Activated B cell treated with CpG ODN at 0.5 μM for 24 hours (primary cell): ENCODE measurements at regions of chr11 and their contacts with region 1.

Region 1: GRCh38 chr11:64971421-64972233 is at the start of gene MAJIN:
- DNase-seq: peak; percentile 83
- ATAC-seq: peak; percentile 77
- H3K4me3 Mint-ChIP-seq: peak within 1 kb of the TSS; percentile 80
- H3K27ac Mint-ChIP-seq: peak within 1 kb of the TSS; percentile 84
- H3K4me1 Mint-ChIP-seq: peaks cover 34% of the 10 kb centered on the region
- H3K27me3 Mint-ChIP-seq: no peaks in the 10 kb centered on the region
- CTCF ChIP-seq: no peak
- total RNA-seq, gene MAJIN: 0.20 and 1.5 TPM in 2 replicates

Region 2: GRCh38 chr11:64924102-64924851 is 47.4 kb before region 1 on chr11 and contains the start of gene PPP2R5B:
- CTCF ChIA-PET with region 1: no interaction called
- POLR2A ChIA-PET with region 1: no interaction called
- intact Hi-C with region 1: loop called (anchors 5 kb)
- DNase-seq: peak; percentile 83
- ATAC-seq: peak; percentile 95
- H3K4me3 Mint-ChIP-seq: peak within 1 kb of the TSS; percentile 93
- H3K27ac Mint-ChIP-seq: peak within 1 kb of the TSS; percentile 96
- H3K4me1 Mint-ChIP-seq: peaks cover 27% of the 10 kb centered on the region
- H3K27me3 Mint-ChIP-seq: no peaks in the 10 kb centered on the region
- CTCF ChIP-seq: no peak
- total RNA-seq, gene PPP2R5B: 12.0 and 12.6 TPM in 2 replicates

Region 3: GRCh38 chr11:64954201-64954600 is 17.4 kb before region 1 on chr11:
- CTCF ChIA-PET with region 1: no interaction called
- POLR2A ChIA-PET with region 1: interaction called, 4 read pairs
- intact Hi-C with region 1: loop called (anchors 2 kb)
- DNase-seq: no peak
- ATAC-seq: no peak
- H3K4me3 Mint-ChIP-seq: no peak overlapping the region
- H3K27ac Mint-ChIP-seq: no peak overlapping the region
- H3K4me1 Mint-ChIP-seq: no peaks in the 10 kb centered on the region
- H3K27me3 Mint-ChIP-seq: peaks cover 6% of the 10 kb centered on the region
- CTCF ChIP-seq: no peak

Region 4: DNA sequence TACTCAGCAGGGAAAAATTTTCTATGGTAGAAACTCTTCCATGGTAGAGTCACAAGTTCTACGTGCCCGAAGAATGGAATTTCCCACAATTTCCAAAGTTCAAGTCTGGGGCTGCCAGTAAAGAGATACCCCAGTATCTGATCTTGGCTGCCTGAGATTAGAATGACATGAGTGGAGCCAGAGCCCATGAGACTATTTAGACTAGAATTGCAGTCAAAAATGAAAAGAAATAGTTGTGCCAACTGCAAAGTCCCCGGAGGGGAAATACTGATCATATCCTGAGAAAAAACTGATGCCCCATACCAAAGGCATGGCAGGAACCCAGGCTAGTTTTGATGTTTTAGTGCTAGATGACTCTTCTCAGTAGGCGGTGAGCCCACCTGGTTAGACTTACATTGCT is 10.9 kb before region 1 on chr11:
- CTCF ChIA-PET with region 1: no interaction called
- POLR2A ChIA-PET with region 1: interaction called, 13 read pairs
- intact Hi-C with region 1: loop called (anchors 2 kb)
- DNase-seq: no peak
- ATAC-seq: no peak
- H3K4me3 Mint-ChIP-seq: no peak overlapping the region
- H3K27ac Mint-ChIP-seq: no peak overlapping the region
- H3K4me1 Mint-ChIP-seq: peaks cover 6% of the 10 kb centered on the region
- H3K27me3 Mint-ChIP-seq: peaks cover 2% of the 10 kb centered on the region
- CTCF ChIP-seq: no peak

Region 5: DNA sequence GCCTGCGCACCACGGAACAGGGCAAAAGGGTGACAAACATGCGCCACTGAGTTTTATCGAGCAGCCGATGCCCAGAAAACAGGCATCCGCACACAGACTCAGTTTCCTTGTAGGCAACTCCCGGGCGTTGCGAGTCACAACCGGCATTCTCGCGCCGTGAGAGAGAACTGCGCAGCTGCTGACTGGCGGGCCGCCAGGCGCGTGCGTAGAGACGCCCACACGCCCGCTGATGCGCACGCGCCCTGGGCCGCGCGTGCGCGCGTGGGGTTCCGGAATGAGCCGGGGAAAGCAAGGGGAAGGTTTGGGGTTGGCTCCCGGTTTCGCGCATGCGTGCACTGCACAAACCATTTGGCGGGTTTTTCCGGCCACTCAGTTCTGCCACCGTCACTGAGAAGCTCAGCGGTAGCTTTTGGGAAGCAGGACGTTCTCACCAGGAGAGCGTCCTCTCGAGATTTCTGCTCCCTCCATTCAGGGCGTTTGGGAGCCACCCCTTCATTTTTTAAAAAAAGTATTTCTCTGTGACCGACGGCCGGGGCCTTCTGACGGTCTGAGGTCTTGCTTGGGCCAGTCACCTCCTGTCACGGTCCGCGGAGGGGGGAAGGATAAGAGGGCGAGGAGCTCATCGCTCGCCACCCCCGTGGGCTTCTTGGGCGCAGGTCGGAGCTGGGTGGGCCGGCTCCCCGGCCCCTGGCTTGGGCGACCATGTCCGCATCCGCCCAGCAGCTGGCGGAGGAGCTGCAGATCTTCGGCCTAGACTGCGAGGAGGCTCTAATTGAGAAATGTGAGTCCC is 290.2 kb after region 1 on chr11 and contains the start of gene POLA2:
- CTCF ChIA-PET with region 1: no interaction called
- POLR2A ChIA-PET with region 1: interaction called, 10 read pairs
- intact Hi-C with region 1: no loop called
- DNase-seq: peak; percentile 98
- ATAC-seq: peak; percentile 83
- H3K4me3 Mint-ChIP-seq: peak within 1 kb of the TSS; percentile 90
- H3K27ac Mint-ChIP-seq: peak within 1 kb of the TSS; percentile 91
- H3K4me1 Mint-ChIP-seq: peaks cover 27% of the 10 kb centered on the region
- H3K27me3 Mint-ChIP-seq: no peaks in the 10 kb centered on the region
- CTCF ChIP-seq: no peak
- total RNA-seq, gene POLA2: 37.1 and 43.4 TPM in 2 replicates